Activated CD4-positive, alpha-beta memory T cell treated with anti-CD3 and anti-CD28 coated beads, Interleukin-2, amount 10 ng/mL, durations not matched to agents 7 days and 5 days (primary cell): ENCODE measurements at regions of chr3 and their contacts with region 1.

Region 1: DNA sequence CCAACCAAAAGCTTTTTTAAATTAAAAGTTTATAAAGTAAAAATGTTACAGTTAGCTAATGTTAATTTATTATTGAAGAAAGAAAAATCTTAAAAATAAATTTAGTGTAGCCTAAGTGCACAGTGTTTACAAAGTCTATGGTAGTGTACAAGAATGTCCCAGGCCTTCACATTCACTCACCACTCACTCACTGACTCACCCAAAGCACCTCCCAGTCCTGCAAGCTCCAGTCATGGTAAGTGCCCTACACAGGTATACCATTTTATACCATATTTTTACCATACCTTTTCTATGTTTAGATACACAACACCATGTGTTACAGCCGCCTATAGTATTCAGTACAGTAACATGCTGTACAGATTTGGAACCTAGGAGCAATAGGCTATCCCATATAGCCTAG is 29.1 kb downstream of the SSR3 start:
- DNase-seq: no peak
- H3K4me3 Mint-ChIP-seq: no peak overlapping the region
- H3K27ac Mint-ChIP-seq: no peak overlapping the region
- H3K4me1 Mint-ChIP-seq: peaks cover 33% of the 10 kb centered on the region
- H3K27me3 Mint-ChIP-seq: peaks cover 6% of the 10 kb centered on the region

Region 2: DNA sequence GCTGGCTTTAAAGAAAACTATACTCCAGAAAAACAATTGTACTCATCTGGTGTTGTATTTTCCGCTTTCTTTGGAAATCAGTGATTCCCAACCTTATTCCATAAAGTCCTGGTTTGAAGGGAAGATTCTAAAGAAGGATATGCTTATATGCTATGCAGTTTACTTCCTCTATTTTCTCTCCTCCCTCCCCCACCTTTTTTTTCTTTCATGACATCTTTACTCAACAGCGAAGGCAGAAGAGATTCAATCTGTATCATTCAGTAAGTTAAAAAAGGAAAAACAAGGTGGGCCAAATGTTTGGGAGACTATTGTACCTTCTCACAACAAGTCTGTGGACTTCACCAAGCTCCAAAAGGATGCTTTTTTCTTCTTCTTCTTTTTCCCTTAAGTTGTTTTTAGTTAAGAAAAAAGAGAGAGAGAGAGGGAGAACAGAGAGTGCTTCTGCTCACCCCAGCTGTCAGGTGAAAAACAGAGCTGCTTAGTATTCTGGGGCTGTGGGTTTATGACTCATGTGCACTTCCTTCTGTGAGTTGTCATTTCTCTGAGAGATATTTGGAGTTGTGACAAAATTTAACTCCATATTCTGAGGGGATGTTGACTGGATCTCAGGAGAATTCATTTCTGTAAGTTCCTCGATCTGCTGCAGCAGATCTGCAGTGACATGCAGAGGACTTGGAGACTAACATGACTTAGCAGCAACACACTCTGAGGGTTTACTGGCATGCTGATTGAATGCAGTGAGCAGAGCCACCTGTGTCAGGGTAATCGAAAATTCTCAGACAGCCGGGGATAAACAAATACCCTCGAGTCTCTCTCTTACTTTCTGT is 41.6 kb before region 1 on chr3:
- CTCF ChIA-PET with region 1: interaction called, 9 read pairs
- POLR2A ChIA-PET with region 1: interaction called, 28 read pairs
- DNase-seq: peak; percentile 62
- H3K4me3 Mint-ChIP-seq: peak overlapping the region; percentile 72
- H3K27ac Mint-ChIP-seq: peak overlapping the region; percentile 88
- H3K4me1 Mint-ChIP-seq: peaks cover 42% of the 10 kb centered on the region
- H3K27me3 Mint-ChIP-seq: no peaks in the 10 kb centered on the region